ENCODE measurements at regions of chr18 and their contacts with region 1.

Region 1: GRCh38 chr18:12883684-12884405 is at the start of gene PTPN2:
- DNase-seq: peak; percentile 94
- ATAC-seq: peak; percentile 90
- H3K4me3 Mint-ChIP-seq: peak within 1 kb of the TSS; percentile 86
- H3K27ac Mint-ChIP-seq: peak within 1 kb of the TSS; percentile 92
- H3K4me1 Mint-ChIP-seq: peaks cover 53% of the 10 kb centered on the region
- H3K27me3 Mint-ChIP-seq: no peaks in the 10 kb centered on the region
- CTCF ChIP-seq: no peak
- total RNA-seq, gene PTPN2: 50.8 to 55.8 TPM

Region 2: DNA sequence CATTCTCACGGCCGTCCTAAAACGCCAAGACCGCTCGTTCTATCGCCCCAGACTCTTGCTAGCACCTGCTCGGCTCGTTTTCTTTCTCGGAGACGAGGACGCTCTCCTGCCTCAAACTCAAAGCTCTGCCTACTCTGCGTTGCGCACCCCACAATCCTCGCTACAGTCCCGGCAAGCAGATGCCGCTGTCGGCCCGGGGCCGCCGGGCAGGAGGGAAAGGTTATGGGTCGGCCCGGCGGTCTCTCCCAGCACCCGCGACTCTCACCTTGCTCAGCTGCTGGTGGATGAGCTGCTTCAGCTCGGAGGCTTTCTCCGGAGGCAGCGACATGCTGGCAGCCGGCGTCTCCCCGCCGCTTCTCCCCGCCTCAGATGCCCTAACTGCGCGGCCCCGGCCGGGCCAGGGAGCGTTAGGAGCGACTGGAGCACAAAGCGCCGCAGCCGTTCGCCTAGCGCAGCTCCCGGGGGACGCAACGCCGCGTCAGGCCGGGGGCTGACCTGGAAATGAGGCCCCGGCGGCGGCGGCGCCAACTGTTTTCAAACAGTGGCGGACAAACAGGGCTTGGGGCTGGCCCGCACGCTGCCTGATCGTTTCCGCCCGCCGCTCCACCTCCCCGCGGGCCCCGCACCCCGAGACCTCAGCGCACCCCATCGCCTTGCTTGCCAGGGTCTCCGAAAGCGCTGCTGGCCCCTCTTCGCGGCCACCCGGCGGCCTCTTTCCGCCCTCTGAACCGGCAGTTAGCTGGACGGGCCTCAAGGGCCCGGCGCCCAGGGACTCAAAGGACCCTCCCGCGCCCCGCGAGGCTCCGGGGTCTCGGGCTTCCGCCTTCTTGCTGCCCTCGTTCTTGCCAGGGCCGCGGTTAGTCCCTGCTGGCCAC is 181.4 kb before region 1 on chr18 and contains the starts of genes CEP76 and PSMG2:
- CTCF ChIA-PET with region 1: no interaction called
- POLR2A ChIA-PET with region 1: interaction called, 12 read pairs
- intact Hi-C with region 1: no loop called
- DNase-seq: peak; percentile 88
- ATAC-seq: peak; percentile 86
- H3K4me3 Mint-ChIP-seq: peak within 1 kb of the TSS; percentile 89
- H3K27ac Mint-ChIP-seq: peak within 1 kb of the TSS; percentile 99
- H3K4me1 Mint-ChIP-seq: peaks cover 35% of the 10 kb centered on the region
- H3K27me3 Mint-ChIP-seq: no peaks in the 10 kb centered on the region
- CTCF ChIP-seq: no peak
- total RNA-seq, gene CEP76: 11.9 to 12.5 TPM
- total RNA-seq, gene PSMG2: 105 to 113 TPM

Region 3: DNA sequence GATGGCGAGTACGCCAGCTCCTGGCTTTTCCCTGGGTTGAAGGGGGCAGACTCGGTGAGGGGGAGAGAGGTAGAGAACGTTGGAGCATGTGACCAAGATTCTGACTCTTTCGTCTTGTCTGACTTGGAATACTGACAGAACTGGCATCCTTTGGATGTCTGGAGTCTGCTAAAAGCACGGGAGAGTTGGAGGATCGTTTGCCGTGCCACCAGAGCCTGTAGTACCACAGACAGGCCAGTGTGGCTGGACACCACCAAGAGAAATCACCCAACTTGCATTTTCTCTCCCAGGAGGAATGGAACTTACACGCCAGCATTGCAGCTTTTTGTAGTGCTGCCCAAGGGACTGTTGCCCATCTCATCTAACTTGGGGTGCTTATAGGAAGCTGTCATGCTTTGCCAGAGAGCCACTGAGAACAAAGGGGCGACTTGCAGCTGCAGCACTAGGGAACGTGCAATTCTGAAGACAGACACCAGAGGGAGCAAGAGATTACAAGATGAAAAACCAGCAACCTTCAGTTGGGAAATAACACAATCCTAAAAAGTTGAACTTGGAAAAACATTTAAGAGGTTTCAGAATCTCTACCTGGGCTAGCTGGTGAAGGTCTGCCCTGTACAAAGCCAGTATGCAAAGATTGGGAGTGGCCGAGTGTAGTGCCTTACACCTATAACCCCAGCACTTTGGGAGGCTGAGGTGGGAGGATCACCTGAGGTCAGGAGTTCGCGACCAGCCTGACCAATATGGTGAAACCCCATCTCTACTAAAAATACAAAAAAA is 156.9 kb before region 1 on chr18:
- CTCF ChIA-PET with region 1: interaction called, 25 read pairs
- POLR2A ChIA-PET with region 1: no interaction called
- intact Hi-C with region 1: no loop called
- DNase-seq: peak; percentile 66
- ATAC-seq: peak; percentile 86
- H3K4me3 Mint-ChIP-seq: no peak overlapping the region
- H3K27ac Mint-ChIP-seq: no peak overlapping the region
- H3K4me1 Mint-ChIP-seq: peaks cover under 1% of the 10 kb centered on the region
- H3K27me3 Mint-ChIP-seq: no peaks in the 10 kb centered on the region
- CTCF ChIP-seq: peak; percentile 96

Region 4: GRCh38 chr18:12744103-12744502 is 139.7 kb before region 1 on chr18:
- CTCF ChIA-PET with region 1: interaction called, 12 read pairs
- POLR2A ChIA-PET with region 1: interaction called, 3 read pairs
- intact Hi-C with region 1: no loop called
- DNase-seq: no peak
- ATAC-seq: peak; percentile 53
- H3K4me3 Mint-ChIP-seq: no peak overlapping the region
- H3K27ac Mint-ChIP-seq: no peak overlapping the region
- H3K4me1 Mint-ChIP-seq: no peaks in the 10 kb centered on the region
- H3K27me3 Mint-ChIP-seq: no peaks in the 10 kb centered on the region
- CTCF ChIP-seq: peak; percentile 64

Region 5: GRCh38 chr18:12777500-12777944 is 106.3 kb before region 1 on chr18:
- CTCF ChIA-PET with region 1: interaction called, 3 read pairs
- POLR2A ChIA-PET with region 1: interaction called, 16 read pairs
- intact Hi-C with region 1: no loop called
- DNase-seq: no peak
- ATAC-seq: no peak
- H3K4me3 Mint-ChIP-seq: no peak overlapping the region
- H3K27ac Mint-ChIP-seq: no peak overlapping the region
- H3K4me1 Mint-ChIP-seq: peaks cover 18% of the 10 kb centered on the region
- H3K27me3 Mint-ChIP-seq: no peaks in the 10 kb centered on the region
- CTCF ChIP-seq: no peak

Region 6: DNA sequence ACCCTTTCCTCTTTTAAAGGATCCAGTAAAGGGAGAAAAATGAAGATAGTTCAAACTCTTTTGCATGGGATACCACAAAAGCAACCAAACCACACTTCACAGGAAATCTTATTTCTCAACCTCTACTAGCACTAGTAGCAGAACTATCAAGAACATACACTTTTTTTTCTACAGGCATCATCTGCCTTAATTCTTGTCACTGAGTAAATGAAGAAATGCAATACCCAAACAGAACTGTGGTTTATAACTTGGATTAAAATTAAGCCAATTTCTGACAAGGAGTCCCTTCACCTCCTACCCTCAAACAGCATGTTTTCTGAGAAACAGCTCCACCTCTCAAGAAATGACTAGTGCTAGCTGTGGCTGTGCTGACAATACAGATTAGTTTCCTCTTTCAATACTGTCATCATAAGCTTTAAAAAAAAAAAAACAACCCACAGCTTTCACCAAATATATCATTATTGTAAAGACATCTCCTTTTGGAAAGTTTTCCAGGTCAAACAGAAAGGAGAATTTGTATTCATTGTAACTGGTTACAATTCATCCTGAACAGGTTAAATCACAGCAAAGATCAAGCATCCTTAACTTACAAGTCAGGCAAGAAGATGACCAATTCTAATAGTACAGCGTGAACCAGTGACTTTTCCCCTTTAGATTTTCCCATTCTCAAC is 44.2 kb before region 1 on chr18:
- CTCF ChIA-PET with region 1: interaction called, 3 read pairs
- POLR2A ChIA-PET with region 1: interaction called, 5 read pairs
- intact Hi-C with region 1: loop called (anchors 5 kb)
- DNase-seq: peak; percentile 65
- ATAC-seq: peak; percentile 85
- H3K4me3 Mint-ChIP-seq: peak overlapping the region; percentile 62
- H3K27ac Mint-ChIP-seq: peak overlapping the region; percentile 98
- H3K4me1 Mint-ChIP-seq: peaks cover 61% of the 10 kb centered on the region
- H3K27me3 Mint-ChIP-seq: no peaks in the 10 kb centered on the region
- CTCF ChIP-seq: no peak

Region 7: GRCh38 chr18:12921178-12921577 is 37.3 kb after region 1 on chr18:
- CTCF ChIA-PET with region 1: interaction called, 3 read pairs
- POLR2A ChIA-PET with region 1: interaction called, 10 read pairs
- intact Hi-C with region 1: no loop called
- DNase-seq: peak; percentile 70
- ATAC-seq: peak; percentile 99
- H3K4me3 Mint-ChIP-seq: peak overlapping the region; percentile 20
- H3K27ac Mint-ChIP-seq: peak overlapping the region; percentile 32
- H3K4me1 Mint-ChIP-seq: peaks cover 12% of the 10 kb centered on the region
- H3K27me3 Mint-ChIP-seq: no peaks in the 10 kb centered on the region
- CTCF ChIP-seq: no peak

Region 8: DNA sequence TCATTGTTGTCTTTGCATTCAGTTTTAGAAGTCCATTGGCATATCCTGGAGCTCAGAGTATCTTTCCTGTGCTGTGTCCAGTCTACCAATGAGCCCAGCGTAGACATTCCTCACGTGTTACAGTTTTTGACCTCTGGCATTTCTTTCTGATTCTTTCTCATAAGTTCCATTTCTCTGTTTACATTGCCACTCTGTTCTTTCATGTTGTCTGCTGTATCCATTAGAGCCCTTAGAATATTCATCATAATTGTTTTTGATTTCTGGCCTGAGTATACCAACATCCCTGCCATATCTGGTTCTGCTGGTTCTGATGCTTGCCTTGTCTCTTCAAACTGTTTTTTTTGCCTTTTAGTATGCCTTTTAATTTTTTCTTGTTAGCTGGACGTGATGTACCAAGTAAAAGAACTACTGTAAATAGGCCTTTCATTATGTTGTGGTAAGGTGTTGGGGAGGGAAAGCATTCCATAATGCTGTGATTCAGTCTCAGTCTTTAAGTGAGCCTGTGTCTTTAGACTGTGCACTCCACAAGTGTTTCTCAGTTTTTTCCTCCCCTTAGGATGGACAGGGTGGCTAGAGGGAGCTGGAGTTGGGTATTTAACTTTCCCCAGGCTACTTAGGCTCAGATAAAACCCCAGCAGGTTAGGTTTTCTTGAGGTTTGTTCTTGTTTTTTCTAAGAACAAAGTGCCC is 142.9 kb after region 1 on chr18:
- CTCF ChIA-PET with region 1: no interaction called
- POLR2A ChIA-PET with region 1: no interaction called
- intact Hi-C with region 1: no loop called
- DNase-seq: no peak
- ATAC-seq: no peak
- H3K4me3 Mint-ChIP-seq: no peak overlapping the region
- H3K27ac Mint-ChIP-seq: no peak overlapping the region
- H3K4me1 Mint-ChIP-seq: peaks cover 9% of the 10 kb centered on the region
- H3K27me3 Mint-ChIP-seq: no peaks in the 10 kb centered on the region
- CTCF ChIP-seq: no peak

Region 9: GRCh38 chr18:13191779-13192178 is 307.9 kb after region 1 on chr18:
- CTCF ChIA-PET with region 1: no interaction called
- POLR2A ChIA-PET with region 1: no interaction called
- intact Hi-C with region 1: no loop called
- DNase-seq: no peak
- ATAC-seq: no peak
- H3K4me3 Mint-ChIP-seq: no peak overlapping the region
- H3K27ac Mint-ChIP-seq: no peak overlapping the region
- H3K4me1 Mint-ChIP-seq: peaks cover 2% of the 10 kb centered on the region
- H3K27me3 Mint-ChIP-seq: peaks cover 1% of the 10 kb centered on the region
- CTCF ChIP-seq: no peak

Measured in activated CD8-positive, alpha-beta T cell treated with anti-CD3 and anti-CD28 coated beads for 36 hours (primary cell).